IMR-90 (cell line): ENCODE measurements at regions of chr13 and their contacts with region 1.

Region 1: GRCh38 chr13:98397221-98397620 is 179.7 kb downstream of the STK24 start:
- DNase-seq: peak; percentile 40
- ATAC-seq: peak; percentile 46; the same call in 1 of the 2 replicates
- H3K4me3 ChIP-seq: no peak overlapping the region
- H3K27ac ChIP-seq: no peak overlapping the region
- H3K4me1 ChIP-seq: peaks cover 6% of the 10 kb centered on the region
- H3K27me3 ChIP-seq: no peaks in the 10 kb centered on the region
- CTCF ChIP-seq: peak; percentile 43
- POLR2A ChIP-seq: no peak
- RAD21 ChIP-seq: peak; percentile 51

Region 2: GRCh38 chr13:98004111-98004510 is 393.1 kb before region 1 on chr13:
- CTCF ChIA-PET with region 1: no interaction called
- POLR2A ChIA-PET with region 1: no interaction called
- dilution Hi-C with region 1: no loop called
- in situ Hi-C with region 1: loop called (anchors 10 kb)
- intact Hi-C with region 1: no loop called
- DNase-seq: peak; percentile 94
- ATAC-seq: peak; percentile 98
- H3K4me3 ChIP-seq: no peak overlapping the region
- H3K27ac ChIP-seq: peak overlapping the region; percentile 79
- H3K4me1 ChIP-seq: peaks cover 8% of the 10 kb centered on the region
- H3K27me3 ChIP-seq: no peaks in the 10 kb centered on the region
- CTCF ChIP-seq: no peak
- POLR2A ChIP-seq: no peak
- RAD21 ChIP-seq: peak; percentile 5; the same call in 1 of the 2 replicates

Region 3: GRCh38 chr13:98014766-98015165 is 382.5 kb before region 1 on chr13:
- CTCF ChIA-PET with region 1: interaction called, 7 read pairs
- POLR2A ChIA-PET with region 1: no interaction called
- dilution Hi-C with region 1: no loop called
- in situ Hi-C with region 1: loop called (anchors 10 kb)
- intact Hi-C with region 1: loop called (anchors 10 kb)
- DNase-seq: peak; percentile 93
- ATAC-seq: peak; percentile 98
- H3K4me3 ChIP-seq: no peak overlapping the region
- H3K27ac ChIP-seq: peak overlapping the region; percentile 57
- H3K4me1 ChIP-seq: peaks cover 7% of the 10 kb centered on the region
- H3K27me3 ChIP-seq: no peaks in the 10 kb centered on the region
- CTCF ChIP-seq: no peak
- POLR2A ChIP-seq: no peak
- RAD21 ChIP-seq: no peak; the same call in 1 of the 2 replicates

Region 4: DNA sequence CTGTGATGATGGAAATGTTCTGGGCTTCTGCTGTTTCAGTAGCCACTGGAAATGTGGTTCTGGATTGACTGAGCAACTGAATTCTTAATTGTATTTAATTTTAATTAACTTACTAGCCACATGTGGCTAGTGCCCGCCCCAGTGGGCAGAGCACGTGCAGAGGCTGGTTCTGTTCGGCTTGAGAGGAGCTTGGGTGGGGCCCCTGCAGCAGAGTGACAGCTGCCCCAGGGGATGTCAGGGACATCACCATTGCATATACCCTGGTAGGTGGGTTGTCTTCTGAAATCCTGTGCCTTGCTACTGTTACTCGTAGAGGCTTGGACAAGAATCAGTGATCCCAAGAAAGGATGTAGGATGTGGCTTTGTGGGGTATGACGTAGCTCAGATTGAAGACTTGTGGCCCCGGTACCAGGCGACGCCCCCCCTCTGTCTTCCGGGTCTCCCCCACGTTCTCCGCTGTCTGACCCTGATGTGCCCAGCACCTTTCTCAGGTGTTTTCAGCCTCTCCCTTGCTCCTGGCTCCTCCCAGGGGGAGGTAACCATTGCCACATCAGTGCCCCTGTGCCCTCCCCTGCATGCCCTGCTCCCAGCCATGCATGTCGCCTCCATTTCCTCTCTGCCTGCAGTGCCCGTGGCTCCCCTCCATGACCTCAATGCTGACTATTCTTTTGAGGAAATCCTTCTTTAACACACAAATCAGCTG is 117.6 kb before region 1 on chr13:
- CTCF ChIA-PET with region 1: no interaction called
- POLR2A ChIA-PET with region 1: no interaction called
- dilution Hi-C with region 1: no loop called
- in situ Hi-C with region 1: no loop called
- intact Hi-C with region 1: no loop called
- DNase-seq: no peak
- ATAC-seq: no peak
- H3K4me3 ChIP-seq: no peak overlapping the region
- H3K27ac ChIP-seq: no peak overlapping the region
- H3K4me1 ChIP-seq: peaks cover 16% of the 10 kb centered on the region
- H3K27me3 ChIP-seq: no peaks in the 10 kb centered on the region
- CTCF ChIP-seq: no peak
- POLR2A ChIP-seq: no peak
- RAD21 ChIP-seq: no peak

Region 5: DNA sequence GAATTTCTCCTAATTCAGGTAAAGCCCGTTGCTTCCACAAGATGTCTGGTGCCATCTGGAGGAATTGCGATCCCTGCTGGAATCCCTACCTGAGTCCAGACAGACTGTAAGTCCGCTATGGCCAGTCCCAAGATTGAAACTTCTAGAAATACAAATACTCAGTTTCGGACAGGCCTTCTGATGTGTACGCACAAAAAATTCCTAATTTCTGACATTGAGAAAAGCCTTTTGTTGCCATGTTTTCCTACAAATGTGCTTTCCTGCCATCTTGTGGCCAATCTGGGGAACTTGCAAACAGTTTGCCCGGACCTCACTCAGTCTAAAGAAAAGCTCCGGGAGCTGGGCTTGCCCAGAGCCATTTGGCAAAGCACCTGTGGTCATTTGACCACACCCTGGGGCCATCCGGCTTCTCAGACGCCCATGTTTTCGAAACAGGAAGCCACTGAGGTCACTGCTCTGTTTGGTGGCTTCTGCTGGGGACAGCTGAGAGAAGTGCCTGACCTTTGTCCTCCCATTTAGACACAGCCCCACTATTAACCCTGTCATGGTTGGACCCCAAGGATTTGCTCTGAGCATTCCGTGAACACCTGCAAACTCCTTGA is 275.8 kb after region 1 on chr13:
- CTCF ChIA-PET with region 1: no interaction called
- POLR2A ChIA-PET with region 1: no interaction called
- dilution Hi-C with region 1: no loop called
- in situ Hi-C with region 1: no loop called
- intact Hi-C with region 1: no loop called
- DNase-seq: peak; percentile 75
- ATAC-seq: peak; percentile 82
- H3K4me3 ChIP-seq: no peak overlapping the region
- H3K27ac ChIP-seq: no peak overlapping the region
- H3K4me1 ChIP-seq: peaks cover 6% of the 10 kb centered on the region; the same call in 1 of the 2 replicates
- H3K27me3 ChIP-seq: peaks cover 16% of the 10 kb centered on the region
- CTCF ChIP-seq: peak; percentile 85
- POLR2A ChIP-seq: no peak
- RAD21 ChIP-seq: peak; percentile 82